MCF 10A (cell line): ENCODE measurements at regions of chr4 and their contacts with region 1.

Region 1: DNA sequence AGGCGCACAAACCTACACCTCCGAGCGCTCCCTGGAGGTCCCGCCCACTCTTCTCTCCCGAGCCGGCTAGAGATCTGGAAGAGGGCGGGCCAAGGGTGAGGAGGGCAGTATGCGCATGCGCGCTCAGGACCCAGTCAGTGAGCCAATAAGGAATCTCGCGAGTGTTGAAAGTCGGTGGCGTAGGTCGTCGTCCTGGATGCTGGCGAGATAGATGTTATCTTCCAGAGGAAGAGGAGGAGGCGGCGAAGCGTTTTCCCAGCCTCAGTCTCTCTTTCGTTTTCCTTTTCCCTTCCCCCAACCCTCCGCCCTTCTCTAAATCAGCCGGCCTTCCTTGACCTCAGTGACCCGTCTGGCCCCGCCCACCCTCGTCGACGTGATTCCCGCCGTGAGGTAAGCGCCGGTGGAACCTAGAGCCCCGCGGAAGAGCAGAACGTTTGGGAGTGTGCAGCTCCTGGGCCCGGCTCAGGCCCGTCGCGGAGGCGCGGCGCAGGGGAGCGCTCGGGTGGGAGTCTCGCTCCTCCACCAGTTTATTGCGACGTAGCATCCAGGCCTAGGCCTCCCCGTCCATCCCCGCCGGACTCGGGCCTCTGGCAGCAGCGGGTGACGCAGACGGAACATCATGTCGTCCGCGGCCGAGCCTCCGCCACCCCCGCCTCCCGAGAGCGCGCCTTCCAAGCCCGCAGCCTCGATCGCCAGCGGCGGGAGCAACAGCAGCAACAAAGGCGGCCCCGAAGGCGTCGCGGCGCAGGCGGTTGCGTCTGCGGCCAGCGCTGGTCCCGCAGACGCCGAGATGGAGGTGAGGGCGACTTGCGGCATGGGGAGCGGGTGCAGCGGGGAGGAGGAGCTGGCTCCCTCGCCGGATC is at the start of gene SMARCA5:
- DNase-seq: peak; percentile 99
- H3K4me3 Mint-ChIP-seq: peak within 1 kb of the TSS; percentile 98
- H3K27ac Mint-ChIP-seq: peak within 1 kb of the TSS; percentile 91
- H3K4me1 Mint-ChIP-seq: peaks cover 15% of the 10 kb centered on the region
- H3K27me3 Mint-ChIP-seq: peaks cover 18% of the 10 kb centered on the region
- CTCF ChIP-seq: no peak
- total RNA-seq, gene SMARCA5: 47.2 and 49.0 TPM in 2 replicates

Region 2: DNA sequence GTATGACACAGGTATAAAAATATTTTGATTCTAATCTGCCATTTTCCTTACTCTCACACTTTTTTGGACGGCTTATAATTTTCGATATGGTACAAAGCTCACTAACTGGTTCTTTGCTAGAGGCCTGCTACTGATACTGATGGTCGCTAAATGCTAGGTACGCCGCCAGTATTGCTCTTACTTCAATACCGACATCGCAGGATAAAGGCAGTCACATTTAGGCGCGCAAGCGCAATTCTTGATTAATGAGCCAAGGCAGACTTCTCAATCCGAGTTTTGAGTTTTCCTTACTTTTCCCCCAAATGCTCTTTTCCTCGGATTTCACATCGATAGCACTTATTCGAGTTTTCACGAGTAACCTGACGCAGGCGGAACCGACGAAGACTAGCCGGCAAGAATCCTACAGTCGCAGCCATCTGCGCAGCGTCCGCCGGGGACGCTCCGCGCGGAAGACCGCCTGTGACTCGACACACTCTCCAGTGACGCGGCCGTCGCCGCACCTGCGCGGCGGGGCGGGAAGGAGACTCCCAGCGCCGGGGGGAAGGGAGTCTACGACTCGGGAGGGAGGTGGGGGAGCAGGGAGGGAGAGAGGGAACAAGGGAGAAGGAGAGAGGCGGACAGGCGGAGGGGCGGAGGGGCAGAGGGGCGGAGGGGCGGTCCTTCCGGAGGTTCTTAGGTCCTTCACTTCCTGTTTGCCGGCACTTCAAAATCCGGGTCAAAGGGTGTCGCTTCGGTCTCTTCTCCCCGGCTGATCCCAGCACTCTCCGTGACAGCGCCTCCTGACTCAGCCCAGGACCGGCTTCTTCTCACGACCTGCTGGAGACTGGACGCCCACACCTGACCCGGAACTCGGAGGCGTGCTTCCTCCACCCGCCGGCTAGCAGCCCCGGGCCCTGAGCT is 329.1 kb before region 1 on chr4 and contains the start of gene USP38:
- CTCF ChIA-PET with region 1: no interaction called
- POLR2A ChIA-PET with region 1: interaction called, 27 read pairs
- intact Hi-C with region 1: loop called (anchors 1 kb)
- DNase-seq: peak; percentile 96
- H3K4me3 Mint-ChIP-seq: peak within 1 kb of the TSS; percentile 79
- H3K27ac Mint-ChIP-seq: peak within 1 kb of the TSS; percentile 91
- H3K4me1 Mint-ChIP-seq: peaks cover 37% of the 10 kb centered on the region
- H3K27me3 Mint-ChIP-seq: no peaks in the 10 kb centered on the region
- CTCF ChIP-seq: no peak
- total RNA-seq, gene USP38: 17.6 and 19.4 TPM in 2 replicates

Region 3: GRCh38 chr4:143367863-143368262 is 145.7 kb before region 1 on chr4:
- CTCF ChIA-PET with region 1: no interaction called
- POLR2A ChIA-PET with region 1: no interaction called
- intact Hi-C with region 1: no loop called
- DNase-seq: no peak
- H3K4me3 Mint-ChIP-seq: no peak overlapping the region
- H3K27ac Mint-ChIP-seq: no peak overlapping the region
- H3K4me1 Mint-ChIP-seq: peaks cover 5% of the 10 kb centered on the region
- H3K27me3 Mint-ChIP-seq: no peaks in the 10 kb centered on the region
- CTCF ChIP-seq: no peak

Region 4: DNA sequence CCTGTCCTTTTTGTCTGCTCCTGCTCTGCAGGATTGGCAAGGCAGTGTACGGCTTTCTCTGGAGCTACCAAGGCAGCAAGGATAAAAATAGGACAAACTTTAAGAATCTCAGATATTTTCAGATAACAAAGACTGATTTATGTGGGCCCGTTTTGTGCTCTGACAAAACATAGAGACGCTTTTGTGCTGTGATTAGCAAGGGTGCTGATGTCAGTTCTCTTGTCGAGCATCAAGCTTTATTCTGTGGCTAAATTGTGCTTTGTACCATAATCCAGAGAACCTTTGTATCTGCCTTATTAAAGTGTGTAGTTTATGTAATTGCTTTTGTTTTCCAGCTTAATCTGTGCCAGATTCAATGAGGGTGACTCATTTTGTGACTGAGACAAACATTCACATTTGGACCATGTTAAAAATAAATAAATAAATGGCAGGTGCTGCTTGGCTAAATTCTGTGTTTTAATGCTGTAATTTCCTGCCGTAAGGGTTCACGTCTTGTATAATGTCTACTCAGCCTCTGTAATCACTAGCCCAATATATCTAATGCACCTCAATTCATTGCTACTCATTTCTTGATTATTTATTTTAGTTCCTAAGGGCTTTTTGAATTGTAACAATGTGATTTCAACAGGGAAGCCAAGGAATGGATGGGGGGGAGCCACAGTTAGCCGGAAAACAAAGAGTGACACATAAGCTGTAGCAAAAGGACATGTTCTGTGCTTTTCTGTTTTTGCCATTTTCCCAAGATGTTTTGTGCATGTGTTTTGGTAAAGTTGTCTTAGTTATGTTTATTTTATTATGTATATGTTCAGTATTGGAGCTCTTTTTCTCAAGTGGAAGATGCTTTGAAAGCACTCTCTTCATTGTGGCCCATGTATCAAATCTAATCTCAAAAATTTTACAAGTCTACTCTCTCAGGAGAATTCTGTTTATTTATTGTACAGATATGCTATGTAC is 101.7 kb before region 1 on chr4:
- CTCF ChIA-PET with region 1: no interaction called
- POLR2A ChIA-PET with region 1: no interaction called
- intact Hi-C with region 1: no loop called
- DNase-seq: peak; percentile 27
- H3K4me3 Mint-ChIP-seq: no peak overlapping the region
- H3K27ac Mint-ChIP-seq: no peak overlapping the region
- H3K4me1 Mint-ChIP-seq: peaks cover 14% of the 10 kb centered on the region
- H3K27me3 Mint-ChIP-seq: no peaks in the 10 kb centered on the region
- CTCF ChIP-seq: no peak

Region 5: GRCh38 chr4:143581331-143581946 is 67.9 kb after region 1 on chr4:
- CTCF ChIA-PET with region 1: no interaction called
- POLR2A ChIA-PET with region 1: no interaction called
- intact Hi-C with region 1: no loop called
- DNase-seq: no peak
- H3K4me3 Mint-ChIP-seq: no peak overlapping the region
- H3K27ac Mint-ChIP-seq: no peak overlapping the region
- H3K4me1 Mint-ChIP-seq: no peaks in the 10 kb centered on the region
- H3K27me3 Mint-ChIP-seq: no peaks in the 10 kb centered on the region
- CTCF ChIP-seq: no peak